ENCODE measurements at regions of chr4 and their contacts with region 1.

Region 1: GRCh38 chr4:170047771-170048354 is 21.7 kb upstream of the MFAP3L start:
- DNase-seq: peak in 2 of 3 donors; percentile 43 to 76
- ATAC-seq: no peak
- H3K4me3 ChIP-seq: no peak overlapping the region
- H3K27ac ChIP-seq: no peak overlapping the region
- H3K4me1 ChIP-seq: no peaks in the 10 kb centered on the region
- H3K27me3 ChIP-seq: no peaks in the 10 kb centered on the region

Region 2: DNA sequence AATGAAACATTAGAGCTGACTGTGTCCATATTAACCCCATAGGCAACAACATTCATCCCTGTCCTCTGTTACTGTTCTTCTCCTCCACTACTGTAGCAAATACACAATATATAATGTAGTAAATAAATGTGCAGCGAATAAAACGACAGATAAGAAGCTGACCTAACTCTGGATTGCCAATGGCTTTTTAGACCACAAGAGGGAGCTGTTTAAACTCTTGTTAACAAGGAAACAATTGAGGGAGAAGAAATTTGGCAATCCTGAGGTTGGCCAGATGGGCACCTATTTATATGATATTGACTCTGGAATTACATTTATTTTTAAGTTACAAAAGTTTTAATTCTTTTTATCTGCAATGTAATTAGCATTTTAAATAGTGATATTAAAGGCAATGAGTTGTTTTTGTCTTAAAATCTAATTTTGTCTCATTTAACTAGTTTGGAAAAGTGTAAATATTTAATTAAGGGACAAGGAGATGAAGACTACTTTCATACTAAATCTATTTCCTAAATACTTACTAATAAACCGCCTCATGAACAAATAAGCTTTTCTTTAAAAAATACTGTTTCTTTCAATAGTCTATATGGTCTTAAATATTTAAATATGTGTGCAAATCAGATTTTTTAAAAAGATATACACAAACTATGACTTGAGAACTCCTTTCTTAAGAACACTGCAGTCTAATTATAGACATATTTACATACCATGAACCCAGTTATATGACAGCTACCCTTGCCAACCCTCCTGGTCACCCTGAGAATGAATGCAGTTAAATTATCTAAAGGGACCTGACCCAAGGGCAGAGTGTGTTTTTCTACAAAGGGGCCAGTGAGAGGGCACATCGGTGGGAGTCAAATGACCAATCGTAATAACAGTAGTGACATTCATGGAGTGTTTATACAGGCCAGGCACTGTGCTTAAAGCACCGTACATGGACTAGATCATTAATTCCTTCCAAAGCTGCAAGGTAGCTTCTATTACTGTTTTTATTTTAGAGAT is 237.2 kb before region 1 on chr4:
- intact Hi-C with region 1: loop called (anchors 2 to 5 kb)
- DNase-seq: no peak
- ATAC-seq: no peak
- H3K4me3 ChIP-seq: no peak overlapping the region
- H3K27ac ChIP-seq: no peak overlapping the region
- H3K4me1 ChIP-seq: no peaks in the 10 kb centered on the region
- H3K27me3 ChIP-seq: no peaks in the 10 kb centered on the region